IMR-90 (cell line): ENCODE measurements at regions of chr19 and their contacts with region 1.

Region 1: GRCh38 chr19:11587302-11587974 is 9.8 kb upstream of the ZNF627 start:
- DNase-seq: peak; percentile 60
- ATAC-seq: peak; percentile 100
- H3K4me3 ChIP-seq: no peak overlapping the region
- H3K27ac ChIP-seq: no peak overlapping the region
- H3K4me1 ChIP-seq: no peaks in the 10 kb centered on the region
- H3K27me3 ChIP-seq: no peaks in the 10 kb centered on the region; the same call in 1 of the 2 replicates
- CTCF ChIP-seq: peak; percentile 91
- POLR2A ChIP-seq: 0 out of 2 replicates have a peak, but pooled peaks have one; percentile 32
- RAD21 ChIP-seq: peak; percentile 88

Region 2: GRCh38 chr19:11496391-11497163 is 90.9 kb before region 1 on chr19:
- CTCF ChIA-PET with region 1: no interaction called
- POLR2A ChIA-PET with region 1: no interaction called
- dilution Hi-C with region 1: no loop called
- in situ Hi-C with region 1: loop called (anchors 5 kb)
- intact Hi-C with region 1: loop called (anchors 1 kb)
- DNase-seq: peak; percentile 86
- ATAC-seq: peak; percentile 98
- H3K4me3 ChIP-seq: no peak overlapping the region
- H3K27ac ChIP-seq: no peak overlapping the region
- H3K4me1 ChIP-seq: peaks cover 3% of the 10 kb centered on the region
- H3K27me3 ChIP-seq: no peaks in the 10 kb centered on the region
- CTCF ChIP-seq: peak; percentile 80
- POLR2A ChIP-seq: no peak
- RAD21 ChIP-seq: peak; percentile 77

Region 3: GRCh38 chr19:11535792-11536595 is 51.4 kb before region 1 on chr19:
- CTCF ChIA-PET with region 1: no interaction called
- POLR2A ChIA-PET with region 1: no interaction called
- dilution Hi-C with region 1: no loop called
- in situ Hi-C with region 1: no loop called
- intact Hi-C with region 1: loop called (anchors 2 kb)
- DNase-seq: peak; percentile 88
- ATAC-seq: peak; percentile 49
- H3K4me3 ChIP-seq: peak overlapping the region; percentile 29
- H3K27ac ChIP-seq: peak overlapping the region; percentile 92
- H3K4me1 ChIP-seq: peaks cover 22% of the 10 kb centered on the region
- H3K27me3 ChIP-seq: no peaks in the 10 kb centered on the region
- CTCF ChIP-seq: peak; percentile 99
- POLR2A ChIP-seq: 0 out of 2 replicates have a peak, but pooled peaks have one; percentile 40
- RAD21 ChIP-seq: peak; percentile 19; the same call in 1 of the 2 replicates

Region 4: GRCh38 chr19:11558881-11559828 is 28.3 kb before region 1 on chr19 and contains the start of gene ELOF1:
- CTCF ChIA-PET with region 1: no interaction called
- POLR2A ChIA-PET with region 1: no interaction called
- dilution Hi-C with region 1: no loop called
- in situ Hi-C with region 1: no loop called
- intact Hi-C with region 1: loop called (anchors 2 kb)
- DNase-seq: peak; percentile 98
- ATAC-seq: peak; percentile 97
- H3K4me3 ChIP-seq: peak within 1 kb of the TSS; percentile 73
- H3K27ac ChIP-seq: peak within 1 kb of the TSS; percentile 49
- H3K4me1 ChIP-seq: no peaks in the 10 kb centered on the region
- H3K27me3 ChIP-seq: no peaks in the 10 kb centered on the region
- CTCF ChIP-seq: 0 out of 2 replicates have a peak, but pooled peaks have one; percentile 15
- POLR2A ChIP-seq: peak; percentile 63; the same call in 1 of the 2 replicates
- RAD21 ChIP-seq: no peak
- total RNA-seq, gene ELOF1: 62.4 and 121 TPM in 2 replicates

Region 5: GRCh38 chr19:12255372-12255771 is 667.9 kb after region 1 on chr19:
- CTCF ChIA-PET with region 1: no interaction called
- POLR2A ChIA-PET with region 1: no interaction called
- dilution Hi-C with region 1: no loop called
- in situ Hi-C with region 1: no loop called
- intact Hi-C with region 1: no loop called
- DNase-seq: no peak
- ATAC-seq: no peak
- H3K4me3 ChIP-seq: no peak overlapping the region
- H3K27ac ChIP-seq: no peak overlapping the region
- H3K4me1 ChIP-seq: no peaks in the 10 kb centered on the region
- H3K27me3 ChIP-seq: no peaks in the 10 kb centered on the region
- CTCF ChIP-seq: no peak
- POLR2A ChIP-seq: no peak
- RAD21 ChIP-seq: no peak